Activated naive CD4-positive, alpha-beta T cell treated with anti-CD3 and anti-CD28 coated beads, Interleukin-2, amount 10 ng/mL, durations not matched to agents 7 days and 5 days (primary cell): ENCODE measurements at regions of chr14 and their contacts with region 1.

Region 1: GRCh38 chr14:24299255-24300195 is at the starts of genes DHRS1 and NOP9:
- DNase-seq: peak; percentile 94
- H3K4me3 Mint-ChIP-seq: peak within 1 kb of the TSS; percentile 93
- H3K27ac Mint-ChIP-seq: peak within 1 kb of the TSS; percentile 93
- H3K4me1 Mint-ChIP-seq: peaks cover 58% of the 10 kb centered on the region
- H3K27me3 Mint-ChIP-seq: peaks cover 5% of the 10 kb centered on the region

Region 2: DNA sequence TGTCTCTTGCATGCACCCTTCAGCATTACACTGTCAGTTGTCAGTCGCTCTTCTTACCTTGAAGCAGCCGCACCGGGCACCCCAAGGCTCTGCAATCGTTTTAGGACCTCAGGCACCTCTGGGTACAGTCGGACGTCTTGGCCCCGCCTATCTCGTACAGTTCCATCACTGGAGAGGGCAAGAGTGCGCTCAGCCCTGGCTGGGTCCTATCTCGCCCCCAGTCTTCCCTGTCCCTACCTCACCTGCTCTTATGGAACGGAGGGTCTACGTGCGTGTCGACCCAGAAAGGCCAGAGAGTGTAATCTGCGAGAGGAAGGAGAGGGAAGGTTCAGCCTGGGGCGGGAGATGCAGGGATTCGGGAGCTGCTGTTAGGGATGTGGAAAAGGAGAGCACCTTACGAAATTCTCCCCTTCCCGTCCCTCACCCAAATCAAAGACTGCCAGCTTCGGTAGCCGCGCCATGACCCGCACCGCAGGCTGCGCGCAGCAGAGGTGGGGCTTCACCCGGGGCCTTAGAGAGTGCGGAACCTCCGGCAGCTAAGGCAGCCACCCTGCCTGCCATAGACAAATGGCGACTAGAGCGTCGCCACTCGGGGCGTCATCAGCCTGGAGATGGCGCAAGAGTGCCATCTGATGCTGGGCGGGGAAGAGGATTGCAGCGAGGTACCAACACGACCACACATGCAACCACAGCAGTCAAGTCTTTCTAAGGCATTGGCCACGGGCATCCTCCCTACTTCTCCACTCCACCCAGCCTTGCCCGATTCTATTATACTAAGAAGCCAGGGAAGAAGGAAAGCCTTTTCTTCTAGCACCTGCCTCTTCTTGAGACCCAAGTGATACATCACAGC is 83.8 kb before region 1 on chr14 and contains the start of gene MDP1:
- CTCF ChIA-PET with region 1: interaction called, 26 read pairs
- DNase-seq: peak; percentile 93
- H3K4me3 Mint-ChIP-seq: peak within 1 kb of the TSS; percentile 94
- H3K27ac Mint-ChIP-seq: peak within 1 kb of the TSS; percentile 95
- H3K4me1 Mint-ChIP-seq: peaks cover 56% of the 10 kb centered on the region
- H3K27me3 Mint-ChIP-seq: peaks cover 6% of the 10 kb centered on the region

Region 3: DNA sequence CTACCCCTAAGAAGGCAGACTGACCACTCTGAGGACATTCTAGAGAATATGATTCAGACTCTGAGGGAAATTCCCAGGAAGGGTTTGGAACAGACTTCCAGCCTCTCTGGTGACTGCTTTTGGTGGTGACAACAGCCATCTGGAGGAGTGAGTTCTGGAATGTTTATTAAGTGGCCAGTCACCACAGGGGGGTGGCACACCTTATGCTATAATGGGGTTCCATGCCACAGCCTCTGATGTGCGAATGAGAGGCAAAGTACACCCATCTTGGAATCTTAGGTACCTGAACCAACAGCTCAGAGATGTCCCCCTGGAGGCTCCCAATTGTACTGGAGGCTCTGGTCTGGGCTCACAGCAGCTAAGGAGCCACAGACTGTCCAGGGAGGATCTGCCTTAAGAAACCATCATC is 47.6 kb before region 1 on chr14:
- CTCF ChIA-PET with region 1: interaction called, 223 read pairs
- DNase-seq: no peak
- H3K4me3 Mint-ChIP-seq: no peak overlapping the region
- H3K27ac Mint-ChIP-seq: no peak overlapping the region
- H3K4me1 Mint-ChIP-seq: peaks cover 35% of the 10 kb centered on the region
- H3K27me3 Mint-ChIP-seq: no peaks in the 10 kb centered on the region

Region 4: GRCh38 chr14:24271134-24271833 is 28.2 kb before region 1 on chr14 and contains the start of gene RABGGTA:
- CTCF ChIA-PET with region 1: interaction called, 110 read pairs
- DNase-seq: peak; percentile 93
- H3K4me3 Mint-ChIP-seq: peak within 1 kb of the TSS; percentile 85
- H3K27ac Mint-ChIP-seq: peak within 1 kb of the TSS; percentile 97
- H3K4me1 Mint-ChIP-seq: peaks cover 54% of the 10 kb centered on the region
- H3K27me3 Mint-ChIP-seq: no peaks in the 10 kb centered on the region